ENCODE measurements at regions of chr4 and their contacts with region 1.

Region 1: DNA sequence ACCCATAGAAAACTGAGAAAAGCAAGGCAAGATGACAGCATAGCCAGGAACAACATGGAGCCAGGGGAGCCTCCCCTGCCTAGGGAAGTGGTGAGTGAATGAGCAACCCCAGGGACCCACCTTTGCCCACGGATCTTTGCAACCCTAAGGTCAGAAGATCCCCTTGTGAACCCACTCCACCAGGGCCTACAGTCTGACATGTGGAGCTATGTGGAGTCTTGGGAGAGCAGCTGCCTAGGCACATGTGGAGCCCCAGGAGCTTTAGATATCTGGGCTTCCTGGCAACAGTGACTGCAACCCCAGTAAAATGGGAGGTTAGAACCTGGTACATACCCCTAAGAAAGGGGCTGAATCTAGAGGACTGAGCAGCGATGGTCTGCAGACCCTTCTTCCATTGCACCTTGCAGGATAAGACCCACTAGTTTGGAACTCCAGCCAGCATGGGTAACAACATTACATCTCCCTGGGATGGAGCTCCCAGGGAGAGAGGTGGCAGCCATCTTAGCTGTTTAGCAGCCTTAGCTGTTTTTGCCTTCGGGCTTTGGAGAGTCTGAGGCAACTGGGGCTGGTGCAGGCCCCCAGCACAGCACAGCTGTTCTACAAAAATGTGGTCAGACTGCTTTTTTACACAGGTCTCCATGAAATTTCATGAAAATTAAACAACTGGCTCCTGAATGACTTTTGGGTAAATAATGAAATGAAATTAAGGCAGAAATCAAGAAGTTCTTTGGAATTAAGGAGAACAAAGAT is 104.7 kb upstream of the TRIM2 start:
- DNase-seq: no peak
- ATAC-seq: no peak
- H3K4me3 ChIP-seq: no peak overlapping the region
- H3K27ac ChIP-seq: no peak overlapping the region
- H3K4me1 ChIP-seq: no peaks in the 10 kb centered on the region
- H3K27me3 ChIP-seq: no peaks in the 10 kb centered on the region
- CTCF ChIP-seq: no peak

Region 2: GRCh38 chr4:153115322-153116290 is 16.0 kb after region 1 on chr4:
- CTCF ChIA-PET with region 1: no interaction called
- POLR2A ChIA-PET with region 1: no interaction called
- intact Hi-C with region 1: loop called (anchors 2 kb)
- DNase-seq: peak; percentile 91
- ATAC-seq: peak; percentile 78
- H3K4me3 ChIP-seq: peak overlapping the region; percentile 54
- H3K27ac ChIP-seq: peak overlapping the region; percentile 99
- H3K4me1 ChIP-seq: peaks cover 23% of the 10 kb centered on the region
- H3K27me3 ChIP-seq: no peaks in the 10 kb centered on the region
- CTCF ChIP-seq: no peak

Measured in PC-3 (cell line).